Activated CD4-positive, alpha-beta T cell treated with anti-CD3 and anti-CD28 coated beads for 36 hours (primary cell): ENCODE measurements at regions of chr21 and their contacts with region 1.

Region 1: GRCh38 chr21:25428537-25428936 is 178.7 kb downstream of the MRPL39 start:
- DNase-seq: no peak
- ATAC-seq: peak; percentile 93
- H3K4me3 Mint-ChIP-seq: peak overlapping the region; percentile 32
- H3K27ac Mint-ChIP-seq: peak overlapping the region; percentile 45
- H3K4me1 Mint-ChIP-seq: peaks cover 52% of the 10 kb centered on the region
- H3K27me3 Mint-ChIP-seq: no peaks in the 10 kb centered on the region

Region 2: DNA sequence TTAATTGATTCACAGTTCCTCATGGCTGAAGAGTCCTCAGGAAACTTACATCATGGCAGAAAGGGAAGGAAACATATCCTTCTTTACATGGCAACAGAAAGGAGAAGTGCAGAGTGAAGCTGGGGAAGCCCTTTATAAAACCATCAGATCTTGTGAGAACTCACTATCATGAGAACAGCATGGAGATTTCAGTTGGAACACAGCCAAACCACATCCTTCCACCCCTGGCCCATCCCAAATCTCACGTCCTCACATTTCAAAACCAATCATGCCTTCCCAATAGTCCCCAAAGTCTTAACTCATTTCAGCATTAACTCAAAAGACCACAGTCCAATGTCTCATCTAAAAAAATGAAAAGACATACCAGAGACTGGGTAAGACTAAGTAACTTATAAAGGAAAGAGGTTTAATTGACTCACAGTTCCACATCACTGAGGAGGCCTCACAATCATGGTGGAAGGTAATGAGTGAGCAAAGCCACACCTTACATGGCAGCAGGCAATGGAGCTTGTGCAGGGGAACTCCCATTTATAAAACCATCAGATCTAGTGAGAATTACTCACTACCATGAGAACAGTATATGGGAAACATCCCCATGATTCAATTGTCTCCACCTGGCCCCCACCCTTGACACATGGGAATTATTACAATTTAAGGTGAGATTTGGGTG is 73.6 kb after region 1 on chr21:
- CTCF ChIA-PET with region 1: interaction called, 3 read pairs
- POLR2A ChIA-PET with region 1: interaction called, 4 read pairs
- intact Hi-C with region 1: loop called (anchors 1 kb)
- DNase-seq: peak; percentile 83
- ATAC-seq: peak; percentile 87
- H3K4me3 Mint-ChIP-seq: peak overlapping the region; percentile 57
- H3K27ac Mint-ChIP-seq: peak overlapping the region; percentile 99
- H3K4me1 Mint-ChIP-seq: peaks cover 80% of the 10 kb centered on the region
- H3K27me3 Mint-ChIP-seq: no peaks in the 10 kb centered on the region